ENCODE measurements at regions of chr7 and their contacts with region 1.

Region 1: DNA sequence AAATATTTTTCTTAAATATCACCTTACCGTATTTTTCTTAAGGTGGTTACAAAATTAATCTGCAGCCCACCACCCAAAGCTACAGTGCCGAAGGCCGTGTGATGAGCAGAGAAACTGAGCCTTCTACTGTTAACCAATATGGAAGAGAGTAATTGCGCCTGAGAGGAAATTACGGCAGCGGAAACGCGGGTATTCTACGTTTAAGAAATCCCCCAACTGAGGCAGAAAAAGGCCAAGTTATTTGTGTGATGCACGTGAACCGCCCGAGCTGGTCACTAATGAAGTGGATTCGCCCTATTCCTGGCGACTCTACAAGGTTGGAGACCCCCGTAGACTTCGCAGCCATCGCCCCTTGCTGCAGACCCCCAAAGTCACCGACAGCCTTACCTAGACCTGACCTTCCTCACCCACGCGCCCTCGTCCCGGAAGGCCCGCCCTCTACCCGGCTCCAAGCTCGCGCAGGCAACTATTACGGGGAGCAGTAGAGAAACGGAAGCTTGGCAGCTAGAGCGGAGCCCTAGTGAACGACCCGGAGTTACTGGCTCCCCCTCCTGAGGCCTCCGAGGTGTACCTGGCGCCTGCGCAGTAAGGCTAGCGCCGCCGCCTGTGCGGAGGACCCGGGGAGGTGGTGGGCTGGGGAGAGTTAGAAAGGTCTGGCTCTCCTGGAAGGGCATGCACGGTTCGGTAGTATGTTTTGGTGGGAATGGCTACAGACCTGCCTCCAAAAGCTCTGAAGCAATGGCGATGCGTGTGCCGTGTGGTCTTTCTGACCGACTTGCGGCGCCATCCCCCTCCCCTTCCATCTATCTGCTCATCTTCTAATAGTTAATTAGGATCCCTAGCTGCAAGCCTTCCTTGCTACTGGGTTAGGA is at the start of gene MRPS33:
- DNase-seq: peak; percentile 90 to 98 (median 94)
- ATAC-seq: peak; percentile 95
- H3K4me3 ChIP-seq: peak within 1 kb of the TSS; percentile 73
- H3K4me3 Mint-ChIP-seq: peak within 1 kb of the TSS; percentile 93
- H3K27ac ChIP-seq: peak within 1 kb of the TSS; percentile 100
- H3K27ac Mint-ChIP-seq: peak within 1 kb of the TSS; percentile 100
- H3K4me1 ChIP-seq: peaks cover 18% of the 10 kb centered on the region
- H3K4me1 Mint-ChIP-seq: peaks cover 44% of the 10 kb centered on the region
- H3K27me3 ChIP-seq: peaks cover 0 to 2% of the 10 kb centered on the region in 2 experiments
- H3K27me3 Mint-ChIP-seq: peaks cover 13% of the 10 kb centered on the region
- CTCF ChIP-seq: peak; percentile 61
- total RNA-seq, gene MRPS33: 21.7 to 24.3 TPM

Region 2: DNA sequence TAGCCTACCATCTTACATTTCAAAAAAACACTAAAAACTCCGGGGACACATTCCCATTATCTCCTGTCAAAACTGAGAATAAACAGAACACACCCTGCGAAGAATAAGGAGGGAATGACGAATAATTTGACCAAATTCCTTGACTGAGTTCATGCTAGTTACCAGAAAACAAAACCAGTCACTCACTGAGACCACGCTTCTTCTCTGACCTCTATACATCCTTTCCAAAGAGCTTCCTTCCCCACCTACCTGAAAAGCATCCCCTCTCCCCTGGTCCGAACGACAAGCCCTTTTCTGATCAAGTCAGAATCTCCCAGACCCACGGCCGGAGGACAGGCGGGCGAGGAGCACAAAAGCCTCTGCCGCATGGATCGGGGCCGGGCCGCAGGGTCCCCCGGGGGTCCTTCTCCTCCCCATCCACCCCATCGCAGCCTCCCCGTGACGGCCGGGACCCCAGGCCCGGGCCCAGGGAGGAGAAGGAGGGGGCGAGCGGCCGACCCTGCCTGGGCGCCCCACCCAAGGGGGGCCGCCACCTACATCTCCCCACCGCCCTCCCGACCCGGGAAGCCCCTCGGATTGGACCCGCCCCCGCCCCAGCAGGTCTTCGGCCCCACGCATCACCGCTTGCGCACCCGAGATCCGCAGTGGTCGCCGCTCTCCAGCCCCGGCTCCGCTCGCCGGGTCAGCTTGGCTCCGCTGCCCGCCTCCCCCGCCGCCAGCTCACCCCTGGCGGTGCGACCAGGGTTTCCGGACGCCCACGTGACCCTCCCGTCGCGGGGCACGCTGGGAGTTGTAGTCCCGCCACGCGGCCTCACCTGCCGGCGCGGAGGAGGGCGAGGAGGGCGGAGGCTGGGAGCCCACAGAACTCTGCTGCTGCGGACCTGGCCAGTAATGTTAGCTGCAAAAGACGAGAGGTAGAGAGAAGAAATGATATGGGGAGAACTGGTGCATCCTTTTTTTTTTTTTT is 616.7 kb before region 1 on chr7 and contains the start of gene SLC37A3:
- CTCF ChIA-PET with region 1: no interaction called
- POLR2A ChIA-PET with region 1: no interaction called
- intact Hi-C with region 1: loop called in 1 of 2 experiments (anchors 10 kb)
- DNase-seq: peak; percentile 75 to 91 (median 84)
- ATAC-seq: peak; percentile 98
- H3K4me3 ChIP-seq: peak within 1 kb of the TSS; percentile 79
- H3K4me3 Mint-ChIP-seq: peak within 1 kb of the TSS; percentile 86
- H3K27ac ChIP-seq: peak within 1 kb of the TSS in 1 of 2 donors; percentile 53
- H3K27ac Mint-ChIP-seq: peak within 1 kb of the TSS; percentile 64
- H3K4me1 ChIP-seq: peaks cover 22% of the 10 kb centered on the region
- H3K4me1 Mint-ChIP-seq: peaks cover 33% of the 10 kb centered on the region
- H3K27me3 ChIP-seq: no peaks in the 10 kb centered on the region
- H3K27me3 Mint-ChIP-seq: no peaks in the 10 kb centered on the region
- CTCF ChIP-seq: no peak
- total RNA-seq, gene SLC37A3: 23.5 to 25.6 TPM

Region 3: GRCh38 chr7:140463111-140463510 is 551.6 kb before region 1 on chr7:
- CTCF ChIA-PET with region 1: no interaction called
- POLR2A ChIA-PET with region 1: no interaction called
- intact Hi-C with region 1: no loop called
- DNase-seq: no peak
- ATAC-seq: no peak
- H3K4me3 ChIP-seq: no peak overlapping the region
- H3K4me3 Mint-ChIP-seq: no peak overlapping the region
- H3K27ac ChIP-seq: no peak overlapping the region
- H3K27ac Mint-ChIP-seq: no peak overlapping the region
- H3K4me1 ChIP-seq: no peaks in the 10 kb centered on the region
- H3K4me1 Mint-ChIP-seq: peaks cover 12% of the 10 kb centered on the region
- H3K27me3 ChIP-seq: no peaks in the 10 kb centered on the region
- H3K27me3 Mint-ChIP-seq: no peaks in the 10 kb centered on the region
- CTCF ChIP-seq: no peak

Region 4: DNA sequence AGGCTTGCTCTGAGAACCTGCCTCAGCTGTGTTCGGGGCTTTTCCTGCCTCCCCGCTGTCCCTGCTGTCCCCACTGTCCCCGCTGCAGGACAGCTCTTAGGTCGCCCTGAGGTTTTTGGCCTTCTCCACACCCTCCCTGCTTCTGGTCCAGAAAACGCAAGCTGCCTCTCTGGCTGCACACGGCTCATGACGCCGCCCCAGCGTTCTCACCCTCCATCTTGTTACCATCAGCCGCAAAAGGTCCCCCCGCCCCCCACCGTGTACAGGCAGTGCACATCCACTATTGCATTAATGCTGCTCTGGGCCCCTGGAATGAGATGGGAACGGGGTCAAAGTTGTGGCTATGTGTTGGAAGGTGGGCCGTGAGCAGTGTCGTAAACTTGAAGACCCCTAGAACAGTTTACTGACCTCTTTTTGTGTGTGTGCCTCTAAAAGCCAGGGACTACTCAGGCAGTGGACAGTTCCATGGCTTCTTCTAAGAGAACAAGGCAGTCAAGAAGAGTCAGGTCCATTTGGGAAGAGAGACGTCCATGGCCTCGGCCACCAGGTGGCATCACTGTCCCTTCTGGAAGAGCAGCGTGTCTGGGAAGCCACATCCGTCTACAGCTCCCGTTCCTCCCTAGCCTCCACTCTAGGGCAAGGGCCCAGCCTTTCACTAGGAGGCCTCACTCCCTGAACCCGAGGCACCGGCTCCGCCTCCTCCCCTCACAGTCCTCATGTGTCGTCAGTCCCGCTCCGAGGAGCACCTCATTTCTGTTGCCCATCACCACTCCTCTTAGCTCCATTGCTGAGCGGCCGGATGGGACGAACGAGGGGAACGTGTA is 497.0 kb before region 1 on chr7:
- CTCF ChIA-PET with region 1: no interaction called
- POLR2A ChIA-PET with region 1: interaction called, 6 read pairs
- intact Hi-C with region 1: loop called (anchors 2 kb)
- DNase-seq: peak; percentile 31 to 79 (median 56)
- ATAC-seq: peak; percentile 81
- H3K4me3 ChIP-seq: no peak overlapping the region
- H3K4me3 Mint-ChIP-seq: no peak overlapping the region
- H3K27ac ChIP-seq: no peak overlapping the region
- H3K27ac Mint-ChIP-seq: no peak overlapping the region
- H3K4me1 ChIP-seq: peaks cover 5% of the 10 kb centered on the region
- H3K4me1 Mint-ChIP-seq: peaks cover 4% of the 10 kb centered on the region
- H3K27me3 ChIP-seq: no peaks in the 10 kb centered on the region
- H3K27me3 Mint-ChIP-seq: peaks cover 10% of the 10 kb centered on the region
- CTCF ChIP-seq: peak; percentile 72

Region 5: GRCh38 chr7:140673063-140673773 is 341.5 kb before region 1 on chr7:
- CTCF ChIA-PET with region 1: no interaction called
- POLR2A ChIA-PET with region 1: interaction called, 20 read pairs
- intact Hi-C with region 1: loop called in 1 of 2 experiments (anchors 5 kb)
- DNase-seq: peak; percentile 39 to 82 (median 59)
- ATAC-seq: peak; percentile 74
- H3K4me3 ChIP-seq: peak overlapping the region; percentile 63
- H3K4me3 Mint-ChIP-seq: peak overlapping the region; percentile 88
- H3K27ac ChIP-seq: peak overlapping the region; percentile 71 to 79
- H3K27ac Mint-ChIP-seq: peak overlapping the region; percentile 90
- H3K4me1 ChIP-seq: peaks cover 29% of the 10 kb centered on the region
- H3K4me1 Mint-ChIP-seq: peaks cover 32% of the 10 kb centered on the region
- H3K27me3 ChIP-seq: no peaks in the 10 kb centered on the region
- H3K27me3 Mint-ChIP-seq: no peaks in the 10 kb centered on the region
- CTCF ChIP-seq: no peak

Region 6: DNA sequence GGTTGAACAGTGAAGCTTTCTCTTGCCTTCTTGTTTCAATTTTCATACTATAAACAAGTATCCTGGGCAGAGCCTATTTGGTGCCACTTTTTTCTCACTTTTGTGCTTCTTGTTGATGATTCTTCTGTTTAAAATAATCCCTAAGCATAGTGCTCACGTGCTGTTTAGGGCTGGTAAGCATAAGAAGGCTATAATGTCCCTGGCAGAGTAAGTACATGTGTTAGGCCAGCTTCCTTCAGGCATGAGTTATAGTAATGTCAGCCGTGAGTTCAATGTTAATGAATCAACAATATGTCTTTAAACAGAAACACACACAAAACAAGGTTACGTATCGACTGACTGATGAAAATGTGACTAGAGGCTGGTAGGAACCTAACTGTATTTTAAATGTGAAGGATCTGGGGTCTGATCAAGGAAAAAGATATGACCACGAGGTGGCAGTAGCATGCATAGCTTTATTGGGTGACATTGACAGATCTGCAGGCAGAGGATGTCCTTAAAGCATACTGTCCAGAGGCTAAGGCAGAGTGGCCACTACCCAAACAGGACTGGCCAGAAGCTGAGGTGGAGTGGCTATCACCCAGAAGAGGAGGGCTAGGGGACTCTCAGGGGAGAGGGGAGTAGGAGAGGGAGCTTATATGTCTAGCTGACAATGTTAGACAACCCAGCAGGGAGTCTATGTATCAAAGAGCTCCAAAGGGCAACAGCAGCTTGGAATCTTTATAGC is 203.8 kb before region 1 on chr7:
- CTCF ChIA-PET with region 1: interaction called, 27 read pairs
- POLR2A ChIA-PET with region 1: interaction called, 36 read pairs
- intact Hi-C with region 1: loop called (anchors 1 kb)
- DNase-seq: peak; percentile 6 to 84 (median 44)
- ATAC-seq: peak; percentile 84
- H3K4me3 ChIP-seq: no peak overlapping the region
- H3K4me3 Mint-ChIP-seq: no peak overlapping the region
- H3K27ac ChIP-seq: no peak overlapping the region
- H3K27ac Mint-ChIP-seq: no peak overlapping the region
- H3K4me1 ChIP-seq: no peaks in the 10 kb centered on the region
- H3K4me1 Mint-ChIP-seq: peaks cover 13% of the 10 kb centered on the region
- H3K27me3 ChIP-seq: no peaks in the 10 kb centered on the region
- H3K27me3 Mint-ChIP-seq: no peaks in the 10 kb centered on the region
- CTCF ChIP-seq: peak; percentile 81

Region 7: DNA sequence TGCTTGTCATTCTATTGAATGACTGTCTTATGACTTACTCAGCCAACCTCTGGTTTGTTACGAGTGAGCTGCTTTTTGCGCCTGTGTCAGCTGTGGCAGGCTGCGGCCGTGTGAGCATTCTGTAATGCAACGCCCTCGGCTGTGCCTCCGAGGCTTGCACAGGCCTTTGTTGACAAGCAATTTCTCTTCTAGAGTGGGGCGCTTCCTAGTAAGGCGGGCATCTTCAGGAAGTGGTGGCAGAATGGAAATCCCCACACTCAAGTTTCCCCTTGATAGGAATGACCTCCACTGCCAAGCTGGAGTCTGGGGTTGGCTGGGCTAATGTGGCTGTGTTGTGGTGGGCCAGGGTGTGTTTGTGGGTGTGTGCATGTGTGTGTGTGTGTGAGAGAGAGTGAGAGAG is 38.9 kb after region 1 on chr7:
- CTCF ChIA-PET with region 1: no interaction called
- POLR2A ChIA-PET with region 1: interaction called, 10 read pairs
- intact Hi-C with region 1: no loop called
- DNase-seq: peak in 13 of 14 experiments; percentile 19 to 88 (median 40)
- ATAC-seq: peak; percentile 91
- H3K4me3 ChIP-seq: no peak overlapping the region
- H3K4me3 Mint-ChIP-seq: no peak overlapping the region
- H3K27ac ChIP-seq: peak overlapping the region in 1 of 2 donors; percentile 16
- H3K27ac Mint-ChIP-seq: peak overlapping the region; percentile 37
- H3K4me1 ChIP-seq: peaks cover 17% of the 10 kb centered on the region
- H3K4me1 Mint-ChIP-seq: peaks cover 14% of the 10 kb centered on the region
- H3K27me3 ChIP-seq: no peaks in the 10 kb centered on the region
- H3K27me3 Mint-ChIP-seq: peaks cover 33% of the 10 kb centered on the region
- CTCF ChIP-seq: no peak

Region 8: DNA sequence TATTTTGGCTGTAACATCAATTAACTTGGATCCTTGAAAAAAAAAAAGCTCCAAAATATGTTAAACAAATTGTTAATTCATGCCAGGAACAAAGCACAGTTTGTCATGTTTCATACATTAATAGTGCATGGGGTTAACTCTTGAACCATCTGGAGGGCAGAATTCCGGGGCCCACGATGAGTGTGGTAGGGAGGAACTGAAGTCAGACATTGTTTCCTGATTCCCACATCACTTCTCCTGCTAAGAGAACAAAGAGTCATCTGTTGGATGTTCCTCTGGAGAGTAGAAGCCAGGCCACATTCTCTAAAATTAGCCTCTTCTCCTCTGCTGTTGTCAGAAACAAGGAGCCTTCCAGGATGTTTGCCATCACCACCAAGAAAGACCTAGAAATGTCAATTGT is 113.7 kb after region 1 on chr7:
- CTCF ChIA-PET with region 1: no interaction called
- POLR2A ChIA-PET with region 1: no interaction called
- intact Hi-C with region 1: no loop called
- DNase-seq: no peak
- ATAC-seq: no peak
- H3K4me3 ChIP-seq: no peak overlapping the region
- H3K4me3 Mint-ChIP-seq: no peak overlapping the region
- H3K27ac ChIP-seq: no peak overlapping the region
- H3K27ac Mint-ChIP-seq: no peak overlapping the region
- H3K4me1 ChIP-seq: no peaks in the 10 kb centered on the region
- H3K4me1 Mint-ChIP-seq: no peaks in the 10 kb centered on the region
- H3K27me3 ChIP-seq: peaks cover 4 to 11% of the 10 kb centered on the region in 2 experiments
- H3K27me3 Mint-ChIP-seq: peaks cover 53% of the 10 kb centered on the region
- CTCF ChIP-seq: no peak

Region 9: DNA sequence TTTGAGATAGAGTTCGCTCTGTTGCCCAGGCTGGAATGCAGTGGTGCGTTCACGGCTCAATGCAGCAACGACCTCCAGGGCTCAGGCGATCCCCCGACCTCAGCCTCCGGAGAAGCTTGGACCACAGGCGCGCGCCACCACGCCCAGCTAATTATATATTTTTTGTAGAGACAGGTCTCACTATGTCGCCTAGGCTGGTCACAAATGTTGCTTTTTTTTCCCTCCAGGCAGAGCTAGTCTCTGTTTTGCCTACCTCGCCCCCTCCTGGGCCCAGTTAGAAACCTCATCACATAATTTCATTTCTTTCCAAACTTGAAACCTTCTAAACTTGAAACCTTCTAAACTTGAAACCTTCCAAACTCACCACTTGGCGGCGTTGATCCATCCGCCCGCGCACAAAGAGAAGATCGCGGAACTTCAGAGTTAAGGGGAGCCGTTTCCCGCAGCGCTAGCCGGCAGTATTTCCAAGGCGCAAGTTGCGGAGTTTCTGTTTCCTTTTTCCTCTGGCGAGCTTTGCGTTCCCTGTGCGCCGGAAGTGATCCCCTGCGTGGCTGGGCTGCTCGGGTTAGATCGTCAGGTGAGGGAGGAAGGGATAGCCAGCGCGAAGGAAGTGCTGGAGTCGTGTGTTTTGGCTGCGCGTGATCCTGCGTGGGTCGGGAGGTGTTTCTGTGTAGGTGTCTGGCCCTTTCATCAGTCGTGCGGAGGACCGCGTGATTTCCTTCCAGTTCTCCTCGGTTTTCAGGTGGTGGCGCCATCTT is 723.3 kb after region 1 on chr7 and contains the start of gene SSBP1:
- CTCF ChIA-PET with region 1: interaction called, 9 read pairs
- POLR2A ChIA-PET with region 1: interaction called, 19 read pairs
- intact Hi-C with region 1: loop called (anchors 2 kb)
- DNase-seq: peak; percentile 83 to 97 (median 88)
- ATAC-seq: peak; percentile 82
- H3K4me3 ChIP-seq: peak within 1 kb of the TSS; percentile 76
- H3K4me3 Mint-ChIP-seq: peak within 1 kb of the TSS; percentile 97
- H3K27ac ChIP-seq: peak within 1 kb of the TSS; percentile 86 to 89
- H3K27ac Mint-ChIP-seq: peak within 1 kb of the TSS; percentile 93
- H3K4me1 ChIP-seq: peaks cover 25% of the 10 kb centered on the region
- H3K4me1 Mint-ChIP-seq: peaks cover 46% of the 10 kb centered on the region
- H3K27me3 ChIP-seq: no peaks in the 10 kb centered on the region
- H3K27me3 Mint-ChIP-seq: no peaks in the 10 kb centered on the region
- CTCF ChIP-seq: peak; percentile 95
- total RNA-seq, gene SSBP1: 108 to 116 TPM

Measured in CD4-positive, alpha-beta T cell (primary cell).